Activated CD8-positive, alpha-beta T cell treated with anti-CD3 and anti-CD28 coated beads, Interleukin-2, amount 10 ng/mL, durations not matched to agents 7 days and 5 days (primary cell): ENCODE measurements at regions of chr19 and their contacts with region 1.

Region 1: DNA sequence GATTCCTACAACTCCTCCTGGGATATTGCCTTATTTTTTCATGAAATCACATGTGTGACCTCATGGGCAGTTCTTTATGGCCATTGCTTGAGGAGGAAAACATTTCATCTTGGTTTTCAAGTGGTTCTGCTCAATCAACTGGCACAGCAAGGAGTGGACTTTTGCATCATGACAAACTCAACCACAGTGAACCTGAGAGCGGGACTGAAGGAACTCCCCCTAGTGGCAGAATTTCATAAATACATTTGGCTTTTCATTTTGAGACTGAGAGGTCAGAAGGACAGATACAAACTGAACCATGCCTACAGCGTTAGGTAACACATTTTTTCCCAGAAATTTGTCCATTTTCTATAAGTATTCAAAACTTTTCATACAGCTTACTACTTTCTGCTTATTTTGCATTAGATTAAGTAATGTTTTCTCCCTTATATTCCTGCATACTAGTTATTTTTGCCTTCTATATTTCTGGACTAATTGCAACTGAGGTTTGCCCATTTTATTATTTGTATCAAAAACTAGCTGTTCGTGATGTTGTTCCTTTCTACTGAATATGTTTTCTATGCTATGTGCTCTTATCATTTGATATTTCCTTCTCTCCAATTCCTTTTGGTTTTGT is 13.4 kb upstream of the SIGLEC12 start:
- DNase-seq: peak; percentile 49
- ATAC-seq: peak; percentile 63
- H3K4me3 Mint-ChIP-seq: no peak overlapping the region
- H3K27ac Mint-ChIP-seq: no peak overlapping the region
- H3K4me1 Mint-ChIP-seq: peaks cover 6% of the 10 kb centered on the region
- H3K27me3 Mint-ChIP-seq: peaks cover 20% of the 10 kb centered on the region

Region 2: DNA sequence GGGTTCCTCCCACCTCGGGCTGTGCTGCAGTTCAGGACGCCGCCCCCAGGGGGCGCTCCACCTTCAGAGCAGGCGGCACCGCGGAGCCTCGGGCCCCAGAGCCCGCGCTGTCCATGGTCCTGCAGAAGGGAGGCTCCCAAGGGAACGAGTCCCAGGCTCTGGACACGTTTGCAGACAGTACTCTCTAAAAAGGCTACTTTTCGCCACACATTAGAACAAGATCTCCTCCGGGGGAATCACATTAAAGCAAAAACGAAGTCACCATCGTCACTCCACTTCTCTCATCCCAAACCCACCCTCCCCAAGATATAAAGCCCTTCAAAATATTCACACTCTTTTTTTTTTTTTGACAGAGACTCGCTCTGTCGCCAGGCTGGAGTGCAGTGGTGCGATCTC is 92.9 kb before region 1 on chr19:
- CTCF ChIA-PET with region 1: interaction called, 10 read pairs
- POLR2A ChIA-PET with region 1: no interaction called
- DNase-seq: peak; percentile 91
- ATAC-seq: peak; percentile 81
- H3K4me3 Mint-ChIP-seq: no peak overlapping the region
- H3K27ac Mint-ChIP-seq: no peak overlapping the region
- H3K4me1 Mint-ChIP-seq: peaks cover 17% of the 10 kb centered on the region
- H3K27me3 Mint-ChIP-seq: peaks cover 21% of the 10 kb centered on the region

Region 3: GRCh38 chr19:51525686-51526085 is 10.7 kb after region 1 on chr19:
- CTCF ChIA-PET with region 1: interaction called, 12 read pairs
- POLR2A ChIA-PET with region 1: no interaction called
- DNase-seq: no peak
- ATAC-seq: no peak
- H3K4me3 Mint-ChIP-seq: no peak overlapping the region
- H3K27ac Mint-ChIP-seq: no peak overlapping the region
- H3K4me1 Mint-ChIP-seq: no peaks in the 10 kb centered on the region
- H3K27me3 Mint-ChIP-seq: peaks cover 26% of the 10 kb centered on the region

Region 4: DNA sequence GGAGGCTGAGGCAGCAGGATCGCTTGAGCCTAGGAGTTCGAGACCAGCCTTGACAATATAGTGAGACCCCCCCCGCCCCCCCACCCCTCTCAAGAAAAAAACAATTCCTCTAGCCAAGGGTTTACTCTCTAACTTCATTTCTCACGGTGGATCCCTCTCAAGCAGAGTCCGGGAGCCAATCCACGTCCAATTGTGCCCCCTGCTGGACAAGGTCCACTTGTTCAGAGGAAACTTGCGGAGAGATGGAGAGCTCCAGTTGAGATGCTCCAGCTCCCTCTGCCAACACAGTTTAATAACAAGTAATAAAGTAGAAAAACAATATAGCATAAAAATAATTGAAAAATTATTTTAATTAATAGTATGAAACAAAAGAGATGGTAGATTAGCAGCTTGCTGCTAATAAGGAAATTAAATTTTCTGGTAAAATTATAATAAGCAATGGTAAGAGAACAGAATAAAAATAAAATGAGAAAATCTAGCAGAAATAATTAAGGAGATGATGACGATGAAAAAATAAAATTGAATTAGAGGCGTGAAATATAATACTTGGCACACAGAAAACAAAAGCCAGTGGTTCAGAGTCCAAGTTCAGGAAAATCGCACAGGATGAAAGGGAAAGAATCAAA is 146.1 kb after region 1 on chr19:
- CTCF ChIA-PET with region 1: interaction called, 21 read pairs
- POLR2A ChIA-PET with region 1: no interaction called
- DNase-seq: peak; percentile 76
- ATAC-seq: peak; percentile 61
- H3K4me3 Mint-ChIP-seq: no peak overlapping the region
- H3K27ac Mint-ChIP-seq: no peak overlapping the region
- H3K4me1 Mint-ChIP-seq: peaks cover 4% of the 10 kb centered on the region
- H3K27me3 Mint-ChIP-seq: peaks cover 19% of the 10 kb centered on the region